OCI-LY7 (cell line): ENCODE measurements at regions of chr10 and their contacts with region 1.

Region 1: DNA sequence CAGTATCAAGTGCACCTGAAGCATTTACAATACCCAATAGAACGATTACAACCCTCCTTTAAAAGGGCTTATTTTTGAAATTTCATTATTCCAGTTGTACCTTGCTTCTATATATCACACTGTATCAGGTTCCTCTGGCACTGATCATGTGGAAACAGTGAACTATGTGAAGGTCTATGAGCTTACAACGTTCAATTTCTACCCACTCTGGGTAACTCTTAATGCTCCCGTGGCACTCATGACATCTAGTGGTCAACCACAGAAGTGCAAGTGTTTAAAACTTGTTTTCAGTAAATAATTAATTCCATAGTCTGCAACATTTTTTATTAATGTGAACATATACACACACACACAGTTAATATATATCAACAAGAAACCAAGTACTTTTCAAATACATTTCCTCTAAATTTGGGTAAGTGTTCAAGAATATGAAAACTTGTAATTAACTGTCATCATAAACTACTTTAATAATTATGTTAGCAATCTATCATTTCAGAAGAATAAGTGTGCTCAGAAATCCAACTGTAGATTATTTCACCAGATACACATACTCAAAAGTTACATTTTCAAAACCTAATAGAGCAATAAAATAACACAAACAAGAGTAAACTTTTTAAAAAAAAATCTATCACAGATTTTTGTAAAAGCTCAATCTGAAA is 61.0 kb downstream of the MPP7 start:
- DNase-seq: peak; percentile 62
- H3K4me3 ChIP-seq: no peak overlapping the region
- H3K27ac ChIP-seq: no peak overlapping the region
- H3K4me1 ChIP-seq: peaks cover 12% of the 10 kb centered on the region
- CTCF ChIP-seq: peak; percentile 99

Region 2: DNA sequence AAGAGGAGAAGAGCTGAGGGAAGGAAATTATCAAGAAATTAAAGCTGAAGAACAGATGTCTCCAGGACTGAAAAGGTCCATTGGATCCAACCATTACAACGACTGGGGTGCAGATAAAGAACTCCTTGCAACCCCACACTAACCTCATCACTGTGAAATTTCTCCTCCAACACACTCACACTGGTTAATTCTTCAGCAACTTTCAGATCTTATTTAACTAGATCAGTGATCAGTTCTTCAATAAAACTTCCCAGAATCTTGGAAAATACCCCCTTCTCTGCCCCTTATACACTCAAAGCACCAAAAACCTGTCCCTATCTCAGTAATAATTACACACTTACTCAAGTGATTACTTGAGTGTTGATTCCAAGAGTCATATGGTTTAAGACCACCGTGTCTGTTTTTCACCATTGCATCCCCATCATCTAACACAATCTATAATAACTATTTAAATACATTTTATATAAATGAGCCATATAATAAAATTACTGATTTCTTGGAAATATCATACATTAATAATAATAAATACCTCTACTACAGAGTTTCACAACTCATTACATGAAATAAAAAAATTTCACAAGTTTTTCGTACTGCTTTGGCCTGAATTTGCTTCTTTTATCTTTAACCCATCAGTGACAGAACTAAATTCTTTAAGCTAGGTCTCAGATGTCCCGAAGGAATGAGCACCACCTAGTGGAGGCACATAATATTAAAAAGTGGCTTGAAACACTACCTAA is 62.7 kb before region 1 on chr10:
- CTCF ChIA-PET with region 1: no interaction called
- POLR2A ChIA-PET with region 1: no interaction called
- intact Hi-C with region 1: loop called (anchors 2 kb)
- DNase-seq: peak; percentile 66
- H3K4me3 ChIP-seq: no peak overlapping the region
- H3K27ac ChIP-seq: no peak overlapping the region
- H3K4me1 ChIP-seq: peaks cover 36% of the 10 kb centered on the region
- CTCF ChIP-seq: peak; percentile 98

Region 3: GRCh38 chr10:28190196-28190595 is 51.7 kb before region 1 on chr10:
- CTCF ChIA-PET with region 1: no interaction called
- POLR2A ChIA-PET with region 1: no interaction called
- intact Hi-C with region 1: no loop called
- DNase-seq: no peak
- H3K4me3 ChIP-seq: no peak overlapping the region
- H3K27ac ChIP-seq: no peak overlapping the region
- H3K4me1 ChIP-seq: no peaks in the 10 kb centered on the region
- CTCF ChIP-seq: no peak